Gastrocnemius medialis (tissue), 4 donors: ENCODE measurements at regions of chr22 and their contacts with region 1.

Region 1: GRCh38 chr22:35430897-35431322 is 31.0 kb downstream of the MCM5 start:
- DNase-seq: peak; percentile 55 to 80
- ATAC-seq: peak; percentile 80 to 84
- H3K4me3 ChIP-seq: no peak overlapping the region
- H3K27ac ChIP-seq: peak overlapping the region in 3 of 4 donors; percentile 12 to 29 (median 14)
- H3K4me1 ChIP-seq: peaks cover 4 to 13% of the 10 kb centered on the region in 2 donors
- H3K27me3 ChIP-seq: no peaks in the 10 kb centered on the region
- CTCF ChIP-seq: peak; percentile 97 to 100 (median 97)
- POLR2A ChIP-seq: no peak

Region 2: GRCh38 chr22:35299673-35300497 is 131.0 kb before region 1 on chr22 and contains the start of gene TOM1:
- in situ Hi-C with region 1: no loop called
- intact Hi-C with region 1: no loop called
- DNase-seq: peak; percentile 96 to 98
- ATAC-seq: peak; percentile 87 to 91
- H3K4me3 ChIP-seq: peak within 1 kb of the TSS; percentile 80 to 86 (median 82)
- H3K27ac ChIP-seq: peak within 1 kb of the TSS; percentile 98 to 99 (median 98)
- H3K4me1 ChIP-seq: peaks cover 37 to 39% of the 10 kb centered on the region in 2 donors
- H3K27me3 ChIP-seq: no peaks in the 10 kb centered on the region
- CTCF ChIP-seq: peak in 1 of 5 experiments; percentile 36
- POLR2A ChIP-seq: peak; percentile 98
- total RNA-seq, gene TOM1: 363 to 609 (median 425) TPM

Region 3: GRCh38 chr22:35582861-35583670 is 152.2 kb after region 1 on chr22:
- in situ Hi-C with region 1: loop called (anchors 5 kb)
- intact Hi-C with region 1: loop called (anchors 1 kb)
- DNase-seq: peak in 1 of 2 donors; percentile 63
- ATAC-seq: peak in 1 of 2 donors; percentile 26
- H3K4me3 ChIP-seq: no peak overlapping the region
- H3K27ac ChIP-seq: peak overlapping the region; percentile 25 to 69 (median 54)
- H3K4me1 ChIP-seq: peaks cover 9 to 17% of the 10 kb centered on the region in 2 donors
- H3K27me3 ChIP-seq: no peaks in the 10 kb centered on the region
- CTCF ChIP-seq: peak; percentile 91 to 97 (median 94)
- POLR2A ChIP-seq: no peak

Region 4: DNA sequence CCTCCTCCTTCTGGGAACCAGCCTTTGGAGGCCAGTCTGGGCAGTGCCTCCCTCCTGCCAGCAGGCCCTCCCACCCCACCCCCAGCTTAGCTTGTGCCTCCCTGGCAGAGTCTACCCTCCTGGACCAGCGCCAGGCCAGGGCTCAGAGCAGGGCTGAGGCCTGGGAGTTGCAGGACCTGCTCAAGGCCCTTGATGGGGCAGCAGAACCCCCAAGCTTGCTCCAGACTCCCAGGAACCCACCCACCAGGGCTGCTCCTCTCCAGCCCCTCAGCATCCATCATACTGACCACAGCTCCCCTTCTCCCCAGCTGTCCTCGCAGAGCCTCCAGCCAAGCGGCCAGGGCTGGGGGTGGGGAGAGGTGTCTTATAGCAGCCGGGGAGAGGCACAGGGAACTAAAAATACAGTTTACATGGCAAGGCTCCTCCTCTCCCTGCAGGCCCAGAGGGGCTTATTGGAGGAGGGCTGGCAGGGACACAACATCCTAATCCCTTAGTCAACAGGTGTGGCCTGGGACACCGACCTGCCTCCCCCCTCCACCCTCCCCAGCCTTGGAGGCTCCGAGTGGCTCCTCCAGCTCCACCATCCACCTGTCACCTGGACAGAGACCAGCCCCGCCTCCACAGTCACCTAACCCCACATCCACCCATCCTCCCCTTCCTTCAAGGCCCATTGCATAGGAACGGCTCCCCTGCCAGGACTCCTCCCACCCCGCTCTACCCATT is 191.4 kb after region 1 on chr22:
- in situ Hi-C with region 1: loop called in 1 of 4 experiments (anchors 5 kb)
- intact Hi-C with region 1: loop called (anchors 2 kb)
- DNase-seq: peak; percentile 96 to 100
- ATAC-seq: peak; percentile 55 to 61
- H3K4me3 ChIP-seq: peak overlapping the region in 3 of 4 donors; percentile 1 to 51 (median 8)
- H3K27ac ChIP-seq: peak overlapping the region; percentile 92 to 97 (median 97)
- H3K4me1 ChIP-seq: peaks cover 62 to 66% of the 10 kb centered on the region in 2 donors
- H3K27me3 ChIP-seq: no peaks in the 10 kb centered on the region
- CTCF ChIP-seq: no peak
- POLR2A ChIP-seq: peak; percentile 64 to 69

Region 5: DNA sequence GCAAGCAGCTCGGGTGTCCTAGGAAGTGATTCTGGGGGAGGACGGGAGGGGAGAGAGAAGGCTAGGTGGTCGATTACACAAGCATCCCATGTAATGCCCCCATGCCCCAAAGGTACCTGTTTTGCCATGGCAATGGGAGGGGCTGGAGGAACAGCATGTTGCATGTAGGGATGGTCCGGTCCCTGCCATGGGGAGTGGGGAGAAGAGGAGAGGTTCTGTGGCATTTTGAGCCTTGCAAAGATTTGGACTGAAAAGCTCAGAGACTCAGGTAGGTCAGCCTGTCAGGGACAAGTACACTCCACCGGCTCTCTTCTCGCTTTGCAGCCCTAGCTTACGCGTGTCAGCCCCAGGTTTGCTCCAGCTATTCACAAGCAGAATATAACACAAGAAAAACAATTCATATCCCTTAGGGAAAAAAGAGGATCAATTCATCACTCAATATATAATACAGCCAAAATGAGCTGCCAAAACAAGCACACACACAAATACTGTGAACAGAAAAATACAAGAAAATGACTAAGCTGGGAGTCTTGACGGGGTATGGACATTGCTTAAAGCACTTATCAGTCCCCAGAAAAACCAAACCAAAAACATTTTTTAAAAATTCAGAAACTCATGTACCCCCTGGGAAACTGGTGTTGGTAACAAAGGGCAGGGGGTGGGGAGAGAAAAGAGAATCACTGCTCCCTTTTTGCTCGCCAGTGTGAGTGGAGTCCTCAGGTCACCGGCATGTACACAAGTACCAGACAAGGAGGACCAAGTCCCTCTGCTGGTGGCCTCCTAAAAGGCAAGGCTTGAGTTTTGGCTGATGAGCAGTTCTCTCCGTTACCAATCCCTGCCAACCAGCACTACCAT is 308.4 kb after region 1 on chr22:
- in situ Hi-C with region 1: no loop called
- intact Hi-C with region 1: loop called (anchors 10 kb)
- DNase-seq: peak in 1 of 2 donors; percentile 48
- ATAC-seq: peak; percentile 28 to 35
- H3K4me3 ChIP-seq: no peak overlapping the region
- H3K27ac ChIP-seq: peak overlapping the region; percentile 46 to 87 (median 82)
- H3K4me1 ChIP-seq: peaks cover 45 to 46% of the 10 kb centered on the region in 2 donors
- H3K27me3 ChIP-seq: no peaks in the 10 kb centered on the region
- CTCF ChIP-seq: peak in 4 of 5 experiments; percentile 22 to 62 (median 42)
- POLR2A ChIP-seq: no peak

Region 6: GRCh38 chr22:35930933-35931332 is 500.0 kb after region 1 on chr22:
- in situ Hi-C with region 1: loop called in 1 of 4 experiments (anchors 25 kb)
- intact Hi-C with region 1: loop called (anchors 10 kb)
- DNase-seq: no peak
- ATAC-seq: peak; percentile 94 to 95
- H3K4me3 ChIP-seq: no peak overlapping the region
- H3K27ac ChIP-seq: no peak overlapping the region
- H3K4me1 ChIP-seq: no peaks in the 10 kb centered on the region
- H3K27me3 ChIP-seq: no peaks in the 10 kb centered on the region
- CTCF ChIP-seq: peak; percentile 45 to 72 (median 66)
- POLR2A ChIP-seq: no peak